ENCODE measurements at regions of chr15 and their contacts with region 1.

Region 1: DNA sequence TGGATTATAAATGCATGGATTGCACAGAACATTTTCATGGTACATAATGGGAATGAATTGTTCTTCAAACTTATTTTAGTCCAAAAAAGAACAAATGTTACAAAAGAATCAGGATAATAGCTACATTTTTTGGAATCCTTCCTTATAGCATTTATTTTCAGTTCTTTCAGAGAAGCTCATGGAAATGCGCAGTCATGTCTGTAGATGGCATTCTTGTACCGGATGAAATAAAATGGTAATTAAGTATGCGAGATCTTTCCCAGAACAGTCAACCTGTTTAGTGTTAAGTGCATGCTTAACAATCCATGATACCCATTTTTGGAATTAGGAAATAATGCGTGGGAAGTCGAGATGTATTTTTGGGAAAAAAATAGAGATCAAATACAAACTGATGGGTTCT is 38.2 kb upstream of the GOLGA8B start:
- DNase-seq: peak; percentile 69
- H3K4me3 ChIP-seq: no peak overlapping the region
- H3K27ac ChIP-seq: peak overlapping the region; percentile 61
- H3K4me1 ChIP-seq: peaks cover 41% of the 10 kb centered on the region
- H3K27me3 ChIP-seq: no peaks in the 10 kb centered on the region
- CTCF ChIP-seq: peak; percentile 16 to 38
- POLR2A ChIP-seq: no peak

Region 2: GRCh38 chr15:34610354-34610753 is 11.3 kb before region 1 on chr15:
- CTCF ChIA-PET with region 1: interaction called, 23 read pairs
- POLR2A ChIA-PET with region 1: no interaction called
- dilution Hi-C with region 1: no loop called
- intact Hi-C with region 1: no loop called
- DNase-seq: peak; percentile 39
- H3K4me3 ChIP-seq: no peak overlapping the region
- H3K27ac ChIP-seq: no peak overlapping the region
- H3K4me1 ChIP-seq: peaks cover 15% of the 10 kb centered on the region
- H3K27me3 ChIP-seq: no peaks in the 10 kb centered on the region
- CTCF ChIP-seq: peak in 1 of 2 donors; percentile 18
- POLR2A ChIP-seq: no peak

Region 3: GRCh38 chr15:34721802-34722795 is 100.4 kb after region 1 on chr15:
- CTCF ChIA-PET with region 1: no interaction called
- POLR2A ChIA-PET with region 1: no interaction called
- dilution Hi-C with region 1: no loop called
- intact Hi-C with region 1: loop called (anchors 1 kb)
- DNase-seq: peak; percentile 58
- H3K4me3 ChIP-seq: peak overlapping the region in 2 of 3 experiments; percentile 32 to 45
- H3K27ac ChIP-seq: peak overlapping the region; percentile 55
- H3K4me1 ChIP-seq: peaks cover 11% of the 10 kb centered on the region
- H3K27me3 ChIP-seq: no peaks in the 10 kb centered on the region
- CTCF ChIP-seq: peak in 1 of 2 donors; percentile 18
- POLR2A ChIP-seq: no peak

Region 4: DNA sequence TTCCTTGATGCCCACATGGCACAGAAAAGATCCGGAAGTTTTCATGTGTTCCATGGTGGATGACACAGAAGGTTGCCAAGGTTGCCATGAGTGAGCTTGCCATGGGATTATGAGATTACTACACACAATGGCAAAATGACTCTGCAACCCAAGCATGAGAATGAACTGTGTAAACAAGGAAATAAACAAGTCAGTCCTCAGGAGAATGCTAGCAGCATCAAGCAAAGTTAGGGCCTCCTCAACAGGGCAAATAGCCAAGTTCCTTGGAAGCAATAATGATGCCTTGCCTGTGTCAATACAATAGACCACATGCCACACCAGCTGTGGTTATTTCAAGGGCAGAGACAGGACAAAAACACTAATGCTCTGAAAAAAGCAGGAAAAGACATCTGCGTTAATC is 306.1 kb after region 1 on chr15:
- CTCF ChIA-PET with region 1: interaction called, 204 read pairs
- POLR2A ChIA-PET with region 1: no interaction called
- dilution Hi-C with region 1: no loop called
- intact Hi-C with region 1: no loop called
- DNase-seq: peak; percentile 52
- H3K4me3 ChIP-seq: no peak overlapping the region
- H3K27ac ChIP-seq: no peak overlapping the region
- H3K4me1 ChIP-seq: no peaks in the 10 kb centered on the region
- H3K27me3 ChIP-seq: no peaks in the 10 kb centered on the region
- CTCF ChIP-seq: no peak
- POLR2A ChIP-seq: no peak

Region 5: GRCh38 chr15:34969340-34970097 is 347.8 kb after region 1 on chr15 and contains the start of gene AQR:
- CTCF ChIA-PET with region 1: interaction called, 19 read pairs
- POLR2A ChIA-PET with region 1: interaction called, 3 read pairs
- dilution Hi-C with region 1: no loop called
- intact Hi-C with region 1: loop called (anchors 2 kb)
- DNase-seq: peak; percentile 98
- H3K4me3 ChIP-seq: peak within 1 kb of the TSS; percentile 56 to 98 (median 95)
- H3K27ac ChIP-seq: peak within 1 kb of the TSS; percentile 46
- H3K4me1 ChIP-seq: peaks cover 11% of the 10 kb centered on the region
- H3K27me3 ChIP-seq: no peaks in the 10 kb centered on the region
- CTCF ChIP-seq: peak; percentile 68 to 93
- POLR2A ChIP-seq: peak; percentile 83
- total RNA-seq, gene AQR: 37.5 and 37.7 TPM in 2 replicates

Region 6: GRCh38 chr15:35306361-35306981 is 684.8 kb after region 1 on chr15:
- CTCF ChIA-PET with region 1: no interaction called
- POLR2A ChIA-PET with region 1: no interaction called
- dilution Hi-C with region 1: no loop called
- intact Hi-C with region 1: loop called (anchors 5 kb)
- DNase-seq: peak; percentile 83
- H3K4me3 ChIP-seq: peak overlapping the region in 1 of 3 experiments; percentile 12
- H3K27ac ChIP-seq: peak overlapping the region; percentile 99
- H3K4me1 ChIP-seq: peaks cover 60% of the 10 kb centered on the region
- H3K27me3 ChIP-seq: no peaks in the 10 kb centered on the region
- CTCF ChIP-seq: no peak
- POLR2A ChIP-seq: no peak